ENCODE measurements at regions of chr1 and their contacts with region 1.

Region 1: DNA sequence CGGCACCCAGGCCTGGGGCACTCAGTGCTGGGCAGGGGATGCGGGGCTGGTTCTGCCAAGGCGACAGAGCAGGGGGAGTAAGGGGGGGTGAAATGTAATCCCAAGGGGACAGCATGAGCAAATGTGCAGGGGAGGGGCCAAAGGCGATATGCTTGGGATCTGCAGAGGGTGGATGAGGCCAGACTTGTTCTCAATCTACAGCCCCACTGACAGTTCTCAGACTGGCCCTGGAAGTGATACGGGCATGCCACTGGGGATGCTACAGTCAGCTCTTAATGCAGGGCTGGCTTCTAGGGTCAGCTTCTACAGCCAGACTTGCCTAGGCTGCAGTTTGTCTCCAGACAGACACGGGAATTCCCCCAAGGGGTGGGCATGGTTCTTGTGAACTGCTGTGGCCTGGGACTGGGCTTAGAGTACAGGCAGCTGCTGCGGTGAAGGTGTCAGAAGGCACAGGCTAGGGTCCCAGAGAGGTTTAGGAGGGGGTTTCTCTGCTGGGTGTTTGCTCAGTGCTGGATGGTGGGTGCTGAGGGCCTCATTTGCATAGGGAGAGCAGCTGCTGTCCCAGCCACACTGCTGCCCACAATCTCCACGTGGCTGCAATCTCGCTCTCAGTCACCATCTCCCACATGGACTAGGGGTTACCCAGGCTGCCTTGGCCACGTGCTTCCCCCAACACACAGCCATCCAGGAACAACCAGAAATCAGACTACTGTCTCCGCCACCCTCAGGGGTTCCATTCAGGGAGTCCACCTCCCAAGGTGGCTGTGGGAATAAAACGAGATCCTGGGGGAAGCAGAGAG is 190.1 kb downstream of the HIVEP3 start:
- DNase-seq: peak; percentile 47
- H3K4me3 Mint-ChIP-seq: peak overlapping the region; percentile 34
- H3K27ac Mint-ChIP-seq: peak overlapping the region; percentile 84
- H3K4me1 Mint-ChIP-seq: peaks cover 39% of the 10 kb centered on the region
- H3K27me3 Mint-ChIP-seq: peaks cover 1% of the 10 kb centered on the region

Region 2: GRCh38 chr1:41394959-41395956 is 333.3 kb before region 1 on chr1:
- intact Hi-C with region 1: no loop called
- DNase-seq: no peak
- H3K4me3 Mint-ChIP-seq: no peak overlapping the region
- H3K27ac Mint-ChIP-seq: no peak overlapping the region
- H3K4me1 Mint-ChIP-seq: no peaks in the 10 kb centered on the region
- H3K27me3 Mint-ChIP-seq: peaks cover 12% of the 10 kb centered on the region

Region 3: GRCh38 chr1:41662061-41662764 is 66.4 kb before region 1 on chr1:
- intact Hi-C with region 1: loop called (anchors 2 kb)
- DNase-seq: peak; percentile 73
- H3K4me3 Mint-ChIP-seq: peak overlapping the region; percentile 70
- H3K27ac Mint-ChIP-seq: peak overlapping the region; percentile 65
- H3K4me1 Mint-ChIP-seq: peaks cover 83% of the 10 kb centered on the region
- H3K27me3 Mint-ChIP-seq: no peaks in the 10 kb centered on the region

Region 4: DNA sequence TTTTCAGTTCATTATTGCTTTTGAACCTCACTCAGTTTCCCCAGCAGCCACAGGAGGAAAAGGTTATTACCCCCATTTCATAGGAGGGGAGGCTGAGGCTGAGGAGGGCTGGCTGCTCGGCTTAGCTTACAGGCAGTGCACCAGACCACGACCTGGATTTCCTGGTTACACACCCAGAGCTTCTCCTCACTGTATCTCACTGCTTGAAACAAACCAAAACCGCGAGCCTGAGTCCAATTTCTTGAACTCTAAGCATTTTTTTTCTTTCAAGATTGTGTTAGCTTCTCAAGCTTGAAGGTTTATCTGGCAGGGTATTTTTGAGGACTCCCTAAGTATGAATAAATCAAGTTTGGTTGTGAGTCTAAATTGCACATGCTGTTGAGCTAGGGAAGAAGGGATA is 55.2 kb before region 1 on chr1:
- intact Hi-C with region 1: loop called (anchors 1 kb)
- DNase-seq: peak; percentile 57
- H3K4me3 Mint-ChIP-seq: peak overlapping the region; percentile 70
- H3K27ac Mint-ChIP-seq: peak overlapping the region; percentile 97
- H3K4me1 Mint-ChIP-seq: peaks cover 94% of the 10 kb centered on the region
- H3K27me3 Mint-ChIP-seq: no peaks in the 10 kb centered on the region

Region 5: DNA sequence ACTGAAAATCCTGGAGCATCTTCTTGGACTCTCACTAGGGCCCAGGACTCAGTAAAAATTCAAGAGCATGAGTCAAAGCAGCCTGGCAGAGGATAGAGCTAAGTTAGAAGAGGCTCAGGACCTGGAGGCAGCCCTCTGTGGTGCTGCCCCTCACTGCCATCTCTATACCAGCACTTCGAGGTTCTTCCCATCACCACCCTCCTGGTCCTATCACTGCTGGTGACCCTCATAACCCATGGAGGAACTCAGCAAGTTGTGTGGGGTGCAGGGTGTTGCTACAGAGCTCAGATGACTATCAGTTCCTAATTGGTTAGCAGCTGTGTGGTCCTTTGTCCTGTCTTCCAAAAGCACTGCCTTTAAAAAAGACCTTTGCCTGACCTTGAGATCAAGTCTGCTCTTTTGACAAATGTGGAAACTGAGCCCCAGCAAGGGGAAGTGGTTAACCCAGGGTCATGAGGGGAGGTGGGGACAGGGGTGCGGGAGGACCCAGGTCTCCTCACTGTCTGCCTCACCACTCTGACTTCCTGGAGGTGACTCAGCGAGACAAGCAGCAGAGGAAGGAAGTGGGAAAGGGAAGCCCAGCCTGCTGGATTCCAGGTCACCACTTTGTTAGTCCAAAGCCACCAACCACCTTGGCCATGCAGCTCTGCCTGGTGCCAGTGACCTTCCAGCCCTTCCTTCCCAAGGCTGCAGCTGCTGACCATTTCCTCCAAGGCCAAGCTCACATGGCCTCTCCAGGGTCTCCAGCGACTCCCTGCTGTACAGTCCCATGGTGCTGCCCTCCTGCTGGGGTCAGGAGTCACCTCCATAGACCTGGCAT is 44.7 kb before region 1 on chr1:
- intact Hi-C with region 1: loop called (anchors 2 kb)
- DNase-seq: peak; percentile 50
- H3K4me3 Mint-ChIP-seq: peak overlapping the region; percentile 54
- H3K27ac Mint-ChIP-seq: peak overlapping the region; percentile 75
- H3K4me1 Mint-ChIP-seq: peaks cover 99% of the 10 kb centered on the region
- H3K27me3 Mint-ChIP-seq: no peaks in the 10 kb centered on the region

Region 6: GRCh38 chr1:41713557-41714327 is 14.9 kb before region 1 on chr1:
- intact Hi-C with region 1: no loop called
- DNase-seq: no peak
- H3K4me3 Mint-ChIP-seq: no peak overlapping the region
- H3K27ac Mint-ChIP-seq: no peak overlapping the region
- H3K4me1 Mint-ChIP-seq: peaks cover 38% of the 10 kb centered on the region
- H3K27me3 Mint-ChIP-seq: peaks cover 3% of the 10 kb centered on the region

Region 7: GRCh38 chr1:41739061-41739955 is 10.7 kb after region 1 on chr1:
- intact Hi-C with region 1: loop called (anchors 1 kb)
- DNase-seq: peak; percentile 74
- H3K4me3 Mint-ChIP-seq: peak overlapping the region; percentile 66
- H3K27ac Mint-ChIP-seq: peak overlapping the region; percentile 98
- H3K4me1 Mint-ChIP-seq: peaks cover 93% of the 10 kb centered on the region
- H3K27me3 Mint-ChIP-seq: peaks cover 2% of the 10 kb centered on the region

Region 8: DNA sequence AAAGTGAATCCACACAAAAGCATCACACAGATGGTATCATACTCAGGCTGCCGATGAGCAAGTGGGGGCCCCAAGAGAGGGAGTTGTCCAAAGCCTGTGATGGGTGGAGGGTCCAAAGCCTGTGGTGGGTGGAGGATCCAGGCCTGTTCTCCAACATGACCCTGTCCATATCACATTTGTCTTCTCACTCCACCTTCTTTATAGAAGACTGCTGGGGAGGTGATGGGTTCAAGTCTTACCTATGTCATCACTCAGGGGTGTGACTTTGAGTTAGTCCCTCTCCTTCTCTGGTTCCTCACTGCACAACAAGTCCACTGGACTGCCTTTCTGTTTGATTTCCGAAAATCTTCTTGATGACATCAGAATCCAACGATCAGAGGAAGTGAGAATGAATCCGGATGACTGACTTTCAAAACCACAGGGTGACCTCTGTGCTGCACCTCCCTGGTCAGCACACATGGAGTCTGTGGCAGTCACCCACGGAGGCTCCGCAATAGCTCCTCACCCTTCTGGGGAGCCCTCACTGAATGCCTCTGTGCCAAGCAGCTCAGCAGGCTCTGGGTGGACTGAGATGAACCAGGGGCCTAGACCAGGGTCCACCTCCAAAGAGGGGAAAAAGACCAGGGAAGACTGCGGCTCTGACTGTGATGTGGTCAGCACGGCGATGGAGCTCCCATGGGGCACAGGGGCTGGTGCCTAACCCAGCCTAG is 23.4 kb after region 1 on chr1:
- intact Hi-C with region 1: loop called (anchors 1 kb)
- DNase-seq: no peak
- H3K4me3 Mint-ChIP-seq: peak overlapping the region; percentile 48
- H3K27ac Mint-ChIP-seq: peak overlapping the region; percentile 81
- H3K4me1 Mint-ChIP-seq: peaks cover 90% of the 10 kb centered on the region
- H3K27me3 Mint-ChIP-seq: no peaks in the 10 kb centered on the region

Region 9: DNA sequence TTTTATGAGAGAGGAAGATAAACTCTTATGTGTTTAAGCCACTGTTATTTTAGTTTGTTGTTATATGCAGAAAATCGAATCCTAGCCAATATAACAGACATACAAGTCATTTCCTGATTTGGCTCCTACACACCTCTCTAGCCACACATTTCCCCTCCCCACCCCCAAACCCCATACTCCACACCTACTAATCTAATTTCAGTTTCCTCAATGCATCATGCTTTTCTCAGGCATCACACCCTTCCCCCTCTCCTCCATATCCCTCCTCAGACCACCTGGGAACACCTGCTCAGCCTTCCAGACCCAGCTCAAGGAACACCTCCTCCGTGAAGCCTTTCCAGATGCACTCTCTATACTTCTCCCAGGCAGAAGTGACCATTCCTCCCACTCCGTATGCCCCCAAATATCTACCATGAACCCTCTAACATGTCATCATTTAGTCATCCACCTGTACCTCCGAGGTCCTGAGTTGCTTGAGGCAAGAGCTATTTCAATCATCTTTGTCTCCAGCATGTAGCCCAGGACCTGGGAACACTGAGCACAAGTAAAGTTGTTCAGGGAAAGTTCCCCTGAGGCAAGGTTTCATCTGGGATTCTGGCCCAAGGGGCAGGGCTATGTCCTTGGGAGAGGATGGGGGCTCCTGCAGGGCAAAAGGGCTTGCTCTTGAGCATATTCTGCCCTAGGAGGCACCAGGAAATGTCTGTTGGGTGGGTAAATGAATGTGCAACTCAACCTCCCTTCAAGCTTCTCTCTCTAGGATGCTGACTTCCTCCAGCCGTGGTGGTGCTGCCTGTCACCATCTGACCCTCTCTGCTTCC is 63.3 kb after region 1 on chr1:
- intact Hi-C with region 1: loop called (anchors 2 kb)
- DNase-seq: peak; percentile 11
- H3K4me3 Mint-ChIP-seq: peak overlapping the region; percentile 32
- H3K27ac Mint-ChIP-seq: peak overlapping the region; percentile 89
- H3K4me1 Mint-ChIP-seq: peaks cover 74% of the 10 kb centered on the region
- H3K27me3 Mint-ChIP-seq: no peaks in the 10 kb centered on the region

Region 10: GRCh38 chr1:41936118-41936517 is 207.5 kb after region 1 on chr1:
- intact Hi-C with region 1: no loop called
- DNase-seq: no peak
- H3K4me3 Mint-ChIP-seq: no peak overlapping the region
- H3K27ac Mint-ChIP-seq: no peak overlapping the region
- H3K4me1 Mint-ChIP-seq: peaks cover 27% of the 10 kb centered on the region
- H3K27me3 Mint-ChIP-seq: peaks cover 19% of the 10 kb centered on the region

Measured in activated T-helper 1 cell treated with anti-CD3 and anti-CD28 coated beads, Interleukin-12 subunit alpha, Interleukin-12 subunit beta, Interleukin-2, Interleukin-4 antibody, amounts not matched to agents 30 ng/mL and 10 ng/mL and 1 ng/mL, durations not matched to agents 14 hours and 24 hours and 36 hours (primary cell).